H1 (cell line): ENCODE measurements at regions of chr22 and their contacts with region 1.

Region 1: GRCh38 chr22:36201630-36202319 is at the start of gene APOL4:
- DNase-seq: no peak
- H3K4me3 ChIP-seq: no peak within 1 kb of the TSS
- H3K27ac ChIP-seq: no peak within 1 kb of the TSS
- H3K4me1 ChIP-seq: peaks cover 0 to 10% (median 6%) of the 10 kb centered on the region in 4 experiments; a peak in 6 of 7 replicates
- H3K27me3 ChIP-seq: no peaks in the 10 kb centered on the region
- CTCF ChIP-seq: no peak
- EP300 ChIP-seq: no peak
- POLR2A ChIP-seq: no peak
- RAD21 ChIP-seq: no peak
- total RNA-seq, gene APOL4: not detected in 2 replicates

Region 2: DNA sequence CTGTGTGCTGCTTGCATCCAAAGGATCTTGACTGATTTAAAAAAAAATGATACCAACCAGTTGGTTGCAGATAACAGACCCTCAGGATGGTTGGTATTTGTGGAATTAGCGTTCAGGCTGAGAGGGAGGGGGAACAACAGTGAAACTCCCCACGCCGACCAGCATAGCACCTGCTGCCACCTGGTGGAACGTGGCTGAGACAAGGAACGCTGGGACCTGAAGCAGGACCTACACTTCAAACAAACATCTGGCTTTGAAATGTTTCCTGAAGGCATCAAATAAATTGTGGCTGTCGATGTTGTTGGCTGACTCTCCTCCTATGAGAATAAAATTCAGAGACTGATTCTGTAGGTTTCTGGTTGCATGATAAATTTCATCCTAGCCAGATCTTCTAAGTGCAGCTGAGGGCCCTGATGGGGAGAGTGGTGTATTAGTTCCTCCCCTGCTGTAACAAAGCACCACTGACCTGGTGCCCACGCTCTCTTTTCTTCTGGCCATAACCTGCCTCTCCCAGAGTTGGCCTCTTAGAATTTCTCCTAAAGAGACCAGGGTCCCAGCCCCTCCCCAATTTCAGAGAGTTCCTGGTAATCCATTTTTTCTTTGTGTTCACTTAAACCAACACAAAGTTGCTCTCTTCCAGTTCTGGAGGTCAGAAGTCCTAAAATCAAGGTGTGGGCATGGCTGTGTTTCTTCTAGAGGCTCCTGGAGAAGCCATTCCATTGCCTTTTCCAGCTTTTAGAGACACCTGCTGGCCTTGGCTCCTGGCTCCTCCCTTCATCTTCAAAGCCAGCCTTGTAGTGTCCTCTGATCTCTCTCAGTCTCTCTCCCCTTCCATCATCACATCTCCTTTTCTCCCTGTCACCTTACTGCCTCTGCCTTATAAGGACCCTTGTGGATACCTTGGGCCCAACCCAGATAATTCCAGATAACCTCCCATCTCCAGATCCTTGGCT is 20.3 kb after region 1 on chr22:
- CTCF ChIA-PET with region 1: interaction called, 13 read pairs
- POLR2A ChIA-PET with region 1: no interaction called
- DNase-seq: peak; percentile 15 to 62
- H3K4me3 ChIP-seq: no peak overlapping the region
- H3K27ac ChIP-seq: no peak overlapping the region
- H3K4me1 ChIP-seq: peaks cover 0 to 3% (median 0%) of the 10 kb centered on the region in 4 experiments; a peak in 1 of 7 replicates
- H3K27me3 ChIP-seq: peaks cover 0 to 2% (median 0%) of the 10 kb centered on the region in 4 experiments; a peak in 1 of 7 replicates
- CTCF ChIP-seq: peak; percentile 81 to 84 (median 82)
- EP300 ChIP-seq: no peak
- POLR2A ChIP-seq: no peak
- RAD21 ChIP-seq: peak; percentile 72 to 76